SK-N-SH (cell line): ENCODE measurements at regions of chr22 and their contacts with region 1.

Region 1: DNA sequence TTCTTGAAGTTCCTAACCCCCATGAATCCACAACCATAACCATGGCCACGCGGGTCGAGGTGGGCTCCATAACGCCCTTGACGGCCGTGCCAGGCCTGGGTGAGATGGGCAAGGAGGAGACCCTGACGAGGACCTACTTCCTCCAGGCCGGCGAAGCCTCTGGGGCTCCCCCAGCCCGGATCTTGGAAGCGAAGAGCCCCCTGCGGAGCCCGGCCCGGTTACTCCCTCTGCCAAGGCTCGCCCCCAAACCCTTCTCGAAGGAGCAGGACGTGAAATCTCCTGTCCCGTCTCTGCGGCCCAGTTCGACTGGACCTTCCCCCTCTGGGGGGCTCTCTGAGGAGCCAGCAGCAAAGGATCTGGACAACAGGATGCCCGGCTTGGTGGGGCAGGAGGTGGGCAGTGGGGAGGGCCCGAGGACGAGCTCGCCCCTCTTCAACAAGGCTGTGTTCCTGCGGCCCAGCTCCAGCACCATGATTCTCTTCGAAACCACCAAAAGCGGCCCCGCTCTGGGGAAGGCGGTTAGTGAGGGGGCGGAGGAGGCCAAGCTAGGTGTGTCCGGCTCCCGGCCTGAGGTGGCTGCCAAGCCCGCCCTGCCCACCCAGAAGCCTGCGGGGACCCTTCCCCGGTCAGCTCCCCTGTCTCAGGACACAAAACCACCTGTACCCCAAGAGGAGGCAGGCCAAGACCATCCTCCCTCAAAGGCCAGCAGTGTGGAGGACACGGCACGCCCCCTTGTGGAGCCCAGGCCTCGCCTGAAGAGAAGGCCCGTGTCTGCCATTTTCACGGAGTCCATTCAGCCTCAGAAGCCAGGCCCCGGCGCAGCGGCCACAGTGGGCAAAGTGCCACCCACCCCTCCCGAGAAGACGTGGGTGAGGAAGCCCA is 75.7 kb downstream of the KIAA1671 start:
- DNase-seq: peak; percentile 66
- H3K4me3 ChIP-seq: no peak overlapping the region
- H3K27ac ChIP-seq: no peak overlapping the region
- H3K4me1 ChIP-seq: peaks cover 13% of the 10 kb centered on the region in 2 experiments; a peak in 1 of 4 replicates
- H3K27me3 ChIP-seq: no peaks in the 10 kb centered on the region
- CTCF ChIP-seq: peak; percentile 56
- EP300 ChIP-seq: no peak
- RAD21 ChIP-seq: peak; percentile 69

Region 2: GRCh38 chr22:25013607-25014006 is 14.6 kb before region 1 on chr22:
- CTCF ChIA-PET with region 1: interaction called, 10 read pairs
- POLR2A ChIA-PET with region 1: no interaction called
- DNase-seq: no peak
- H3K4me3 ChIP-seq: no peak overlapping the region
- H3K27ac ChIP-seq: no peak overlapping the region
- H3K4me1 ChIP-seq: peaks cover 5 to 9% of the 10 kb centered on the region in 2 experiments; a peak in 2 of 4 replicates
- H3K27me3 ChIP-seq: no peaks in the 10 kb centered on the region
- CTCF ChIP-seq: no peak
- EP300 ChIP-seq: no peak
- RAD21 ChIP-seq: no peak